GM13976 (cell line): ENCODE measurements at regions of chr3 and their contacts with region 1.

Region 1: GRCh38 chr3:6799264-6799915 is 61.5 kb upstream of the GRM7 start:
- DNase-seq: peak; percentile 30
- CTCF ChIP-seq: peak; percentile 69

Region 2: DNA sequence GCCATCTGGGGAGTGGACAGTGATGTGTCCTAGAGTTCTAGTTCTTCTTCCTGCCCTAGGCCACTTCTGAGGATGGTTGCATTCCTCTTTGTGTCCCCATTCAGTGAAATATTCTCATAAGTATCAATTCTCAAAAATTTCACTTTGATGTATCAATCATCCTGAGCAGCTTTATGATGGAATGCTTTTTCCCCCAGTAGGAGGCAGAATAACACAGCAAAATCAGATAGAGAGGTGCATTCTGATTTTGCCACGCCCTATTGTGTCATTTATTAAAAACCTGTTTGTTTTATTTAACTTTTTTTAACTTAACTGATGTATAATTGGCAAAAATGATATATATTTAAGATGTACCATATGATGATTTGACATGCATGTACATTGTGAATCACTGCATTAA is 594.5 kb before region 1 on chr3:
- in situ Hi-C with region 1: loop called (anchors 25 kb)
- DNase-seq: peak; percentile 13
- CTCF ChIP-seq: no peak

Region 3: GRCh38 chr3:6444888-6445658 is 354.3 kb before region 1 on chr3:
- in situ Hi-C with region 1: no loop called
- DNase-seq: no peak
- CTCF ChIP-seq: no peak

Region 4: DNA sequence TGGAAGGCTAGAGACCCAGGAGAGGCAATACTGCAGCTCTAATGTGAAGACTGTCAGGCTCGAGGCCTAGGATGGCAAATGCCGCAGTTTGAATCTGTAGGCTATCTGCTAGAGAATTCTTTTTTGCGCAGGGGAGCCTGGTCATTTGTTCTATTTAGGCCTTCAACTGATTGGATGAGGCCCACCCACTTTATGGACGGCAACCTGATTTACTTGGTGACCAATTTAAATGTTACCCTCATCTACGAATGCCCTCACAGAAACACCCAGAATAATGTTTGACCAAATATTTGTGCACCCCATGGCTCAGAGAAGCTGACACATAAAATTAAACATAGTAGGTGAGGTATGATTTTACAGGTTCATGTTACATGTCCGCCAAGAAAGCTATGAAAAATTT is 239.1 kb before region 1 on chr3:
- in situ Hi-C with region 1: no loop called
- DNase-seq: no peak
- CTCF ChIP-seq: no peak

Region 5: DNA sequence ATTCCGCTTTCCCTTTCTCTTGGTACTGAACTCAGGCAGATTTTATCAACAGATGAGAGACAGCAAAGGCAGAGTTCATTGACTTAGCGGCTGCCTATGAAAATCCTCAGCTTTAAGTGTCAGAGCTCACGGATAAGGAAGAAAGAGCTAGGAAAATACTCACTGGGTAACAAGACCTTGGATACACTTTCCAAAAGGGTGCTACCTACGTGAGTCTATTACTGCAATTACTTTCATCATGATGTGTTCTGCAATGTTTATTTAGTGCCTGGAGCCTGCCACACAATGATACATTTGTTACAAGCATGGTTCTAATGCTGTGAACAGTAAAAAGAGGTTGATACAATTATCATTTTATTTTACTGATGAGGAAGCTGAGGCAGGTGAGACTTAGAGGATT is 239.0 kb after region 1 on chr3:
- in situ Hi-C with region 1: no loop called
- DNase-seq: no peak
- CTCF ChIP-seq: no peak